Aorta (tissue), 5 donors: ENCODE measurements at regions of chr6 and their contacts with region 1.

Region 1: GRCh38 chr6:3913077-3913957 is 64.1 kb downstream of the FAM50B start:
- DNase-seq: no peak
- ATAC-seq: peak; percentile 91
- H3K4me3 ChIP-seq: no peak overlapping the region
- H3K27ac ChIP-seq: peak overlapping the region; percentile 92 to 93
- H3K4me1 ChIP-seq: peaks cover 3 to 14% of the 10 kb centered on the region in 2 donors
- H3K27me3 ChIP-seq: no peaks in the 10 kb centered on the region

Region 2: GRCh38 chr6:3825851-3826581 is 87.3 kb before region 1 on chr6:
- intact Hi-C with region 1: loop called (anchors 5 kb)
- DNase-seq: peak; percentile 96 to 97
- ATAC-seq: peak; percentile 93
- H3K4me3 ChIP-seq: no peak overlapping the region
- H3K27ac ChIP-seq: peak overlapping the region; percentile 90 to 98
- H3K4me1 ChIP-seq: no peaks in the 10 kb centered on the region
- H3K27me3 ChIP-seq: no peaks in the 10 kb centered on the region

Region 3: DNA sequence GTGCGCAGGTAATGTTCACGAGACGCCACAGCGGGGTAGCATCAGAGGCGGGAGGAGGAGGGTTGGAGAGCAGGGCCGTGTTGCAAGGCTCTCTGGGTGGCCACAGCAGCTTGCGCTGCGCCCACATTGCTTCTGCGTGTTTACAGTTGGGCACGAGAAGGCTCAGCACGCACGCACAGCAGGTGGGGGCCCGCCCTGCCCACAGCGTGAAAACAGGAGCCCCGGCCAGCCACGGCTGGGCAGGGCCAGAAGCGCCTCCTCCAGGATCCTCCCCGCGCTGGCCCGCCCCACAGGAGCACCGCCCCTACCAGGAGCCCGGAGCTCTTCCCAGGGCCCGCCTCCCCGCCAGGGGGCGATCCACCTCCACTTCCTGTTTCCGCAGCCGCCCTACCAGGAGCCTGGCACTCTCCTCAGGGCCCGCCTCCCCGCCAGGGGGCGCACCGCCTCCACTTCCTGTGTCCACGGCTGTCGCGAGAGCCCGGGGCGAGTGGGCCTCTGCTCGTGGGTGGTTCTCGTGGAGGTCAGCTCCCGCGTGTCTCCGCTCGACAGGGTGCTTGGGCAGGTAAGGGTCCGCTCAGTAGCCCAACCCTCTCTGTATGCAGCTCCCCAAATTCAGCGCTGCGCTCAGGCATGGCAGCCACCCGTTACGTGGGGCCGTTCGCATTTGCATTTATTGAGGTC is 64.3 kb before region 1 on chr6 and contains the start of gene FAM50B:
- intact Hi-C with region 1: loop called in 1 of 2 experiments (anchors 5 kb)
- DNase-seq: peak; percentile 95 to 98
- ATAC-seq: peak; percentile 98
- H3K4me3 ChIP-seq: peak within 1 kb of the TSS in 1 of 2 donors; percentile 9
- H3K27ac ChIP-seq: peak within 1 kb of the TSS in 1 of 2 donors; percentile 55
- H3K4me1 ChIP-seq: peaks cover 0 to 4% of the 10 kb centered on the region in 2 donors
- H3K27me3 ChIP-seq: no peaks in the 10 kb centered on the region
- total RNA-seq, gene FAM50B: 7.8 to 9.1 TPM